ENCODE measurements at regions of chr18 and their contacts with region 1.

Region 1: GRCh38 chr18:45938488-45938935 is 28.6 kb downstream of the EPG5 start:
- DNase-seq: peak in 1 of 2 donors; percentile 72
- ATAC-seq: peak; percentile 79 to 92 (median 91)
- H3K4me3 ChIP-seq: no peak overlapping the region
- H3K4me3 Mint-ChIP-seq: peak overlapping the region; percentile 83
- H3K27ac ChIP-seq: peak overlapping the region; percentile 79
- H3K27ac Mint-ChIP-seq: peak overlapping the region; percentile 86 to 89
- H3K4me1 ChIP-seq: peaks cover 19% of the 10 kb centered on the region
- H3K4me1 Mint-ChIP-seq: peaks cover 47 to 51% of the 10 kb centered on the region in 2 donors
- H3K27me3 ChIP-seq: no peaks in the 10 kb centered on the region
- H3K27me3 Mint-ChIP-seq: no peaks in the 10 kb centered on the region
- CTCF ChIP-seq: no peak

Region 2: GRCh38 chr18:45874491-45875184 is 63.9 kb before region 1 on chr18:
- intact Hi-C with region 1: loop called (anchors 1 kb)
- DNase-seq: peak; percentile 48 to 80
- ATAC-seq: peak; percentile 81 to 87 (median 82)
- H3K4me3 ChIP-seq: no peak overlapping the region
- H3K4me3 Mint-ChIP-seq: peak overlapping the region; percentile 61
- H3K27ac ChIP-seq: peak overlapping the region; percentile 63
- H3K27ac Mint-ChIP-seq: peak overlapping the region; percentile 84 to 86
- H3K4me1 ChIP-seq: peaks cover 20% of the 10 kb centered on the region
- H3K4me1 Mint-ChIP-seq: peaks cover 32 to 38% of the 10 kb centered on the region in 2 donors
- H3K27me3 ChIP-seq: no peaks in the 10 kb centered on the region
- H3K27me3 Mint-ChIP-seq: no peaks in the 10 kb centered on the region
- CTCF ChIP-seq: no peak

Region 3: GRCh38 chr18:45981821-45982220 is 43.3 kb after region 1 on chr18:
- intact Hi-C with region 1: no loop called
- DNase-seq: no peak
- ATAC-seq: no peak
- H3K4me3 ChIP-seq: no peak overlapping the region
- H3K4me3 Mint-ChIP-seq: no peak overlapping the region
- H3K27ac ChIP-seq: no peak overlapping the region
- H3K27ac Mint-ChIP-seq: no peak overlapping the region
- H3K4me1 ChIP-seq: no peaks in the 10 kb centered on the region
- H3K4me1 Mint-ChIP-seq: no peaks in the 10 kb centered on the region
- H3K27me3 ChIP-seq: no peaks in the 10 kb centered on the region
- H3K27me3 Mint-ChIP-seq: no peaks in the 10 kb centered on the region
- CTCF ChIP-seq: no peak

Measured in natural killer cell (primary cell).